Activated B cell treated with CpG ODN at 0.5 μM for 24 hours (primary cell): ENCODE measurements at regions of chr2 and their contacts with region 1.

Region 1: GRCh38 chr2:136238286-136239078 is 120.5 kb upstream of the CXCR4 start:
- DNase-seq: peak; percentile 38
- ATAC-seq: peak; percentile 77
- H3K4me3 Mint-ChIP-seq: peak overlapping the region; percentile 24
- H3K27ac Mint-ChIP-seq: peak overlapping the region; percentile 92
- H3K4me1 Mint-ChIP-seq: peaks cover 91% of the 10 kb centered on the region
- H3K27me3 Mint-ChIP-seq: no peaks in the 10 kb centered on the region
- CTCF ChIP-seq: no peak

Region 2: GRCh38 chr2:135997380-135997779 is 241.1 kb before region 1 on chr2:
- CTCF ChIA-PET with region 1: interaction called, 12 read pairs
- POLR2A ChIA-PET with region 1: interaction called, 12 read pairs
- intact Hi-C with region 1: no loop called
- DNase-seq: peak; percentile 41
- ATAC-seq: peak; percentile 97
- H3K4me3 Mint-ChIP-seq: peak overlapping the region; percentile 24
- H3K27ac Mint-ChIP-seq: peak overlapping the region; percentile 86
- H3K4me1 Mint-ChIP-seq: peaks cover 51% of the 10 kb centered on the region
- H3K27me3 Mint-ChIP-seq: no peaks in the 10 kb centered on the region
- CTCF ChIP-seq: no peak

Region 3: GRCh38 chr2:136051001-136051724 is 187.3 kb before region 1 on chr2:
- CTCF ChIA-PET with region 1: no interaction called
- POLR2A ChIA-PET with region 1: interaction called, 4 read pairs
- intact Hi-C with region 1: loop called (anchors 1 kb)
- DNase-seq: no peak
- ATAC-seq: peak; percentile 54
- H3K4me3 Mint-ChIP-seq: peak overlapping the region; percentile 17
- H3K27ac Mint-ChIP-seq: peak overlapping the region; percentile 68
- H3K4me1 Mint-ChIP-seq: peaks cover 57% of the 10 kb centered on the region
- H3K27me3 Mint-ChIP-seq: no peaks in the 10 kb centered on the region
- CTCF ChIP-seq: no peak

Region 4: DNA sequence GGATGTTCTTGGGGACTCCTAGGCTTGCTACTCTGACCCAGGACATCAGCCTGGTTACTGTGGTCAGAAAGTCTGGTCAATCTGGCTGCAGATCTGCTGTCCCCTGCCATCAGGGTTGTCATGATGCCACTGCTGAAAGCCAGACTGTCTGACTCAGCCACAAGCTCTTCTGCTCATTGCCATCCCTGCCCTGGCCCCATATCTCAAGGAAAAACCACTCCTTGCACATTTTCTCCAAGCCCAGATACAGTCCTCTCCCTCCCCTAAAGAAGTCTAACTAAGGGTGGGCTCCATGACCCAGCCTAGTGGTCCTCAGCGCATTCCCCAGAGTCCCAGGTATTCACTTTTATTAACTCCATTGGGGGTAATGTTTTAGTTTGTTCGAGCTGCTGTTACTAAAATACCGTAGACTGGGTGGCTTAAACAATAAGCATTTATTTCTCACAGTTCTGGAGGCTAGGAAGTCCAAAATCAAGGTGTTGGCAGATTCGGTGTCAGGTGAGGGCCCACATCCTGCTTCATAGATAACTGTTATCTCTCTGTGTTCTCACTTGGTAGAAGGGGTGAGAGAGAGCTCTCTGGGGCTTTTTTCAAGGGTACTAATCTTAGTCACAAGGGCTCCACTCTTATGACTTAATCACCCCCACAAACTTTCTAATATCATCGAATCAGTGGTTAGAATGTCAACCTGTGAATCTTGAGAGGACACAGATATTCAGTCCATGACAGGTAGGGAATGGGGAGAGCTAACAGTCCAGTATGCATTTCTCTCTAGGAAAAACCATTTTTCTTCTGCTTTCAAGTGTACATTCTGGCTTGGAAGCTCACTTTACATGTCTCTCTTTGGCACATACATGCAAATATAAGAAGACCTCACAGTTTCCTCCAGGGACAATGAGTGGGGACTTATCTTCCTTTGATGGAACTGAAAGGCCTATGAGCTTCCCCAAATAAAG is 25.8 kb before region 1 on chr2:
- CTCF ChIA-PET with region 1: interaction called, 19 read pairs
- POLR2A ChIA-PET with region 1: interaction called, 124 read pairs
- intact Hi-C with region 1: loop called (anchors 1 kb)
- DNase-seq: no peak
- ATAC-seq: peak; percentile 72
- H3K4me3 Mint-ChIP-seq: peak overlapping the region; percentile 64
- H3K27ac Mint-ChIP-seq: peak overlapping the region; percentile 97
- H3K4me1 Mint-ChIP-seq: peaks cover 97% of the 10 kb centered on the region
- H3K27me3 Mint-ChIP-seq: no peaks in the 10 kb centered on the region
- CTCF ChIP-seq: no peak

Region 5: GRCh38 chr2:136225950-136226835 is 12.3 kb before region 1 on chr2:
- CTCF ChIA-PET with region 1: interaction called, 3 read pairs
- POLR2A ChIA-PET with region 1: interaction called, 82 read pairs
- intact Hi-C with region 1: loop called (anchors 1 kb)
- DNase-seq: no peak
- ATAC-seq: peak; percentile 77
- H3K4me3 Mint-ChIP-seq: peak overlapping the region; percentile 2
- H3K27ac Mint-ChIP-seq: peak overlapping the region; percentile 87
- H3K4me1 Mint-ChIP-seq: peaks cover 67% of the 10 kb centered on the region
- H3K27me3 Mint-ChIP-seq: no peaks in the 10 kb centered on the region
- CTCF ChIP-seq: no peak

Region 6: DNA sequence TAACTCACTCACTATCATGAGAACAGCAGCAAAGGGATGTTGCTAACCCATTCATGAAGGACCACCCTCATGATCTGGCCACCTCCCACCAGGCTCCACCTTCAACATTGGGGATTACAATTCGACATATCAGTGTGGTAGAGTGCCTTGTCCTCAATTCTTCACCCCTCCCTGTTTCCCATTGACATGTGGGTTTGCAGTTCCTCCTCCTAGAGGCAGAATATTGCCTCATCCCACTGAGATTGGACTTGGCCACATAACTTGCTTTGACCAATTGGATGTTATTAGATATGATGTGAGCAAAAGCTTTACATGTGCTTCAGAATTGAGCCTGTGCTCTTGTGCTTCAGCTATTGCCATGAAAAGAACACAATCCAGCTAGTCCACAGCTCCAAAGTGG is 96.5 kb after region 1 on chr2:
- CTCF ChIA-PET with region 1: no interaction called
- POLR2A ChIA-PET with region 1: no interaction called
- intact Hi-C with region 1: no loop called
- DNase-seq: no peak
- ATAC-seq: no peak
- H3K4me3 Mint-ChIP-seq: no peak overlapping the region
- H3K27ac Mint-ChIP-seq: no peak overlapping the region
- H3K4me1 Mint-ChIP-seq: no peaks in the 10 kb centered on the region
- H3K27me3 Mint-ChIP-seq: no peaks in the 10 kb centered on the region
- CTCF ChIP-seq: no peak

Region 7: DNA sequence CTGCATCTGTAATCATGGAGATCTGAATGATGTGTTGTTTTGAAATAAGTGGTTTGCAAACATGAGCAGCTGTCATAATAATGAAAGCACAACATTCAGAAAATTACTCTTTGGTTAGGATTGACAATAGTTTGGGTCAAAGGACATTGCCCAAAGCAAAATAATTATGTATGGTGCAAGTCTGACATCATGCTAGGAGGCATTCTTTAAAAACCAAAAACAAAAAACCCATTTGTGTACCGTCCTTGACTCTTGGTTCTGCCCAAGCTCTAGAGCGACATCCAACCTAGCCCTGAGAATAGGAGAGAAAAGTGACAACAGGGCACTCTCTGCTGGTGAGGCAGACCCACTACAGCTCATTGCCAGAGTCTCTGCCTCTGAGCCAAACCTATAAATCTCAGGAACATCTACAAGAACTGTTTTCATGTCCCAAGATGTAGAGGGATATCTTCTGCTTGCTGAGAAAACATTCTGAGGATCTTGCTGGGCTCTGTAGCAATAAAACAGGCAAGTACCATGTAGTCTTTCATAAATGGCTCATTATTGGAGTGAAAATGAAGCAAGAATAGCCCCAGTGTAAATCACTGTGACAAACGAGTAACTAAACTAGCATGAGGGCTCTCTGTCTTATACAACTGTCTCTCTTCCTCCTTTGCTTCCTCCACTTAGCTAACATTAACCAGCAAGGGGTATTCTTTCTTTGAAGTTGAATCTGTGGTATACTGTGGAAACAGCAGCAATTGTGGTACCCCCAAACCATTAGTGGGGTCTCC is 146.2 kb after region 1 on chr2:
- CTCF ChIA-PET with region 1: interaction called, 5 read pairs
- POLR2A ChIA-PET with region 1: interaction called, 43 read pairs
- intact Hi-C with region 1: loop called (anchors 1 kb)
- DNase-seq: no peak
- ATAC-seq: peak; percentile 67
- H3K4me3 Mint-ChIP-seq: peak overlapping the region; percentile 33
- H3K27ac Mint-ChIP-seq: peak overlapping the region; percentile 94
- H3K4me1 Mint-ChIP-seq: peaks cover 50% of the 10 kb centered on the region
- H3K27me3 Mint-ChIP-seq: no peaks in the 10 kb centered on the region
- CTCF ChIP-seq: peak; percentile 38